ENCODE measurements at regions of chr1 and their contacts with region 1.

Region 1: GRCh38 chr1:168136709-168137514 is at the start of gene GPR161:
- DNase-seq: peak; percentile 57
- H3K4me3 ChIP-seq: peak within 1 kb of the TSS; percentile 46 to 73 (median 67)
- H3K27ac ChIP-seq: peak within 1 kb of the TSS; percentile 1
- H3K4me1 ChIP-seq: peaks cover 3% of the 10 kb centered on the region
- H3K27me3 ChIP-seq: no peaks in the 10 kb centered on the region
- CTCF ChIP-seq: no peak
- total RNA-seq, gene GPR161: 15.0 to 27.1 TPM

Region 2: DNA sequence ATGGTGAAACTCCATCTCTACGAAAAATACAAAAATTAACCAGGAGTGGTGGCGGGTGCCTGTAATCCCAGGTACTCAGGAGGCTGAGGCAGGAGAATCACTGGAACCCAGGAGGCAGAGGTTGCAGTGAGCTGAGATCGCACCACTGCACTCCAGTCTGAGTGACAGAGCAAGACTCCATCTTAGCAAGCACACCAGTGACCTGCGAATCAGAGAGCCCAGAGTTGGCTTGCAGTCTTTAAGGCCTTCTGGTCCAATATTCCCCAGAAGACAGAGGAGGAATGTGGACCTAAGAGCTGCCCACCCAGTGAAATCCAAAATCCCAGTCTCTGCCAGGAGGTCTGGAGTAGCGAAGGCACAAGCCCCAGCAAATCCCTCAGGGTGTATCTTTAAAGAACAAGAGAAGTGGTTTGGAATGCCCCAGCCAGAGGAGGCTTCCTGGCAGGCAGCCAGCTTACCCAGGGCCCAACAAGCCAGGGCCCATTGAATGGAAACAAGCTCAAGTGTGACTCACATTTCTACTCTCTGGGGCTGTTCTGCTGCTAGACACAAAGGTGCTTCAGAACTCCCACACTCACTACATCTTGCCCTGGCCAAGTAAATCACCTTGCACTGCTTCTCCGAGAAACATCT is 24.1 kb before region 1 on chr1:
- CTCF ChIA-PET with region 1: no interaction called
- dilution Hi-C with region 1: no loop called
- in situ Hi-C with region 1: no loop called
- intact Hi-C with region 1: loop called (anchors 2 kb)
- DNase-seq: peak; percentile 99
- H3K4me3 ChIP-seq: no peak overlapping the region
- H3K27ac ChIP-seq: peak overlapping the region; percentile 71
- H3K4me1 ChIP-seq: peaks cover 37% of the 10 kb centered on the region
- H3K27me3 ChIP-seq: no peaks in the 10 kb centered on the region
- CTCF ChIP-seq: no peak